RWPE1 (cell line): ENCODE measurements at regions of chr2 and their contacts with region 1.

Region 1: DNA sequence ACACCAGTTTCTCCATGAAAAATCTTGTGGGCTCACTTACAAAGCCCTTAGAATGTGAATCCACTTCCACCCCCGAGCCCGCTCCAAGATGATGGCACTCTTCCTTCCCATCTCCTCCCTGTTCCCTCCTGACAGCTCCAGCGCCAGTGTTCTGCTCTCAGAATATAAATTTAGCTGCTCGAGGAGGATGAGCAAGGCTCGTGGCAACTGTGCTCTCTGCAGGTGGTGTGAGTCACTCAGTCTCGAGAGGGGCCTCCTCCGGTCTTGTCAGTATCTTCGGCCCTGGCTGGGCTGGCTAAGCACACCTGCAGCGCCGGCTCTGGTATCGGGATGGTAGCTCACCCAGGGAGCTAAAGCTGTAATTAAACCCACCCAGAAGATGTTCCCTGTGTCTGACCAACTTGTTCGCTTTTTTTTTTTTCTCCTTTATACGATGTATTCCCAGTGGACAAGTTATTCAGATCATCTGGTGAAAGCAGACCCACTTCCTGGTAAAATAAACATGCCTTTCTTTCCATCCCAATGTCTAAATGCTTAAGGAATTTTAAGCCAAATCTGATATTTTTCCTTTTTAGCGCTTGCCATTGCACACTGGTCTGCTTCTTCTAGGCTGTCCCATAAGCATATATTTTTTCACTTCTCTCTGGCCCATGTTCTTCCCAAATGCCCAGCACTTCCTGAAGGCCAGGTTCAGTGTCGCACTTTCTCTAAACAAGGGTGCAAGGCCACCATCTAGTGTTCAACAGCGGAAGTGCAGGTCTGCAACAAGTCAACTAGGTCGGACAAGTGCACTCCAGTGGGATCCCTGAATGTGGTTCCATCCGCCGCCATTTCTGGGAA is 31.4 kb upstream of the YPEL5 start:
- DNase-seq: peak; percentile 48
- H3K27ac ChIP-seq: no peak overlapping the region
- CTCF ChIP-seq: peak; percentile 81

Region 2: GRCh38 chr2:30095402-30095801 is 20.0 kb before region 1 on chr2:
- CTCF ChIA-PET with region 1: interaction called, 16 read pairs
- POLR2A ChIA-PET with region 1: no interaction called
- DNase-seq: no peak
- H3K27ac ChIP-seq: no peak overlapping the region
- CTCF ChIP-seq: no peak